ENCODE measurements at regions of chr3 and their contacts with region 1.

Region 1: GRCh38 chr3:49327485-49327884 is 12.4 kb downstream of the USP4 start:
- DNase-seq: peak; percentile 35
- ATAC-seq: peak; percentile 81
- H3K4me3 ChIP-seq: no peak overlapping the region
- H3K27ac ChIP-seq: no peak overlapping the region
- H3K4me1 ChIP-seq: no peaks in the 10 kb centered on the region
- H3K27me3 ChIP-seq: no peaks in the 10 kb centered on the region
- CTCF ChIP-seq: peak; percentile 48
- EP300 ChIP-seq: no peak
- POLR2A ChIP-seq: no peak
- RAD21 ChIP-seq: peak; percentile 29; the same call in 1 of the 2 replicates

Region 2: DNA sequence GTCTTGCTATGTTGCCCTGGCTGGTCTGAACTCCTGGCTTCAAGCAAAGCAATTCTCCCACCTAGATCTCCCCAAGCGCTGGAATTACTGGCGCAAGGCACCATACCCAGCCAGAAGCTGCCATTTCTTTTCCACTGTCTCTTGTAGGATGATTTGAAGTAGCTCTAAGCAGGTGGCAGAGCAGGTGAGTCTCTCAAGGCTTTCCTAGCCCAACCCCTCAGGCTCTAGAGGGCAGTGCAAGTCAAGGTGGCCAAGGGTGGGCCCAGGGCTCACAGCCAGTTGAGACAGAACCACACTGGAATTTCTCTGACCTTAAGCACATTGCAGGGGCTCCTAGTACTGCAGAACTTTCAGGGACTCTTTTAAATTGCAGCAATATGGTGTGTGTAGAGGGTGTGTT is 127.0 kb after region 1 on chr3:
- CTCF ChIA-PET with region 1: interaction called, 7 read pairs
- POLR2A ChIA-PET with region 1: no interaction called
- in situ Hi-C with region 1: loop called (anchors 25 kb)
- intact Hi-C with region 1: loop called (anchors 1 kb)
- DNase-seq: peak; percentile 66
- ATAC-seq: peak; percentile 91
- H3K4me3 ChIP-seq: no peak overlapping the region
- H3K27ac ChIP-seq: no peak overlapping the region
- H3K4me1 ChIP-seq: peaks cover 46% of the 10 kb centered on the region
- H3K27me3 ChIP-seq: no peaks in the 10 kb centered on the region
- CTCF ChIP-seq: peak; percentile 90
- EP300 ChIP-seq: no peak
- POLR2A ChIP-seq: no peak
- RAD21 ChIP-seq: peak; percentile 63

Region 3: GRCh38 chr3:49955636-49956035 is 628.2 kb after region 1 on chr3:
- CTCF ChIA-PET with region 1: no interaction called
- POLR2A ChIA-PET with region 1: no interaction called
- in situ Hi-C with region 1: no loop called
- intact Hi-C with region 1: no loop called
- DNase-seq: no peak
- ATAC-seq: no peak
- H3K4me3 ChIP-seq: no peak overlapping the region
- H3K27ac ChIP-seq: no peak overlapping the region
- H3K4me1 ChIP-seq: peaks cover 6% of the 10 kb centered on the region; the same call in 1 of the 2 replicates
- H3K27me3 ChIP-seq: no peaks in the 10 kb centered on the region
- CTCF ChIP-seq: no peak
- EP300 ChIP-seq: no peak
- POLR2A ChIP-seq: no peak
- RAD21 ChIP-seq: no peak